GM10248 (cell line): ENCODE measurements at regions of chr6 and their contacts with region 1.

Region 1: DNA sequence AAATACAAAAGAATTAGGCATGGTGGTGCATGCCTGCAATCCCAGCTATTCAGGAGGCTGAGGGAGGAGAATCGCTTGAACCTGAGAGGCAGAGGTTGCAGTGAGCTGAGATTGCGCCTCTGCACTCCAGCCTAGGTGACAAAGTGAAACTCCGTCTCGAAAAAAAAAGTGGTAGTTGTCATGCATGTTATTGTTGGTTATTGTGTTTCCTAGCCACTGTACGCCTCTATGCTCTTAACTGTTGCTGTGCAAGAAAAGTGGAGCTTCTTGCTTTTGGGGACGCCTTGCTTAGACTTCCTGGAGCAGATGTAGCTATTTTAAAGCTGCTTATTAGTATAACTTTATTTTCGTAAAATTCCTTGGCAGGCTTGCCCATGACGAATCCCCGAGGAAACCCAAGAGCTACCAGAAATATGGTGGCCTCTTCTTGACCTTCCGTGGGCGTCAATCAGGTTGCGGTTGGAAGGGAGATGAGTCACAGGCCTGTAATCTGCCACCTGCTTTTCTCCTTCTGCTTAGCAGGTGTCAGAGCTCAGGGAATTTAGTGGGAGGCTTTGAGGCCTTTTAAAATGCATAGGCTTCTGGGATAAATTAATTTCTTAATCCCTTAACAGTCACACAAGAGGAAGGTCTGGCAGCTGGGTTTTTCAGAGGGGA is 17.3 kb downstream of the GABRR2 start:
- DNase-seq: peak; percentile 78
- CTCF ChIP-seq: no peak

Region 2: GRCh38 chr6:89217299-89217910 is 80.4 kb before region 1 on chr6 and contains the start of gene GABRR1:
- CTCF ChIA-PET with region 1: no interaction called
- POLR2A ChIA-PET with region 1: no interaction called
- DNase-seq: no peak
- CTCF ChIP-seq: no peak

Region 3: DNA sequence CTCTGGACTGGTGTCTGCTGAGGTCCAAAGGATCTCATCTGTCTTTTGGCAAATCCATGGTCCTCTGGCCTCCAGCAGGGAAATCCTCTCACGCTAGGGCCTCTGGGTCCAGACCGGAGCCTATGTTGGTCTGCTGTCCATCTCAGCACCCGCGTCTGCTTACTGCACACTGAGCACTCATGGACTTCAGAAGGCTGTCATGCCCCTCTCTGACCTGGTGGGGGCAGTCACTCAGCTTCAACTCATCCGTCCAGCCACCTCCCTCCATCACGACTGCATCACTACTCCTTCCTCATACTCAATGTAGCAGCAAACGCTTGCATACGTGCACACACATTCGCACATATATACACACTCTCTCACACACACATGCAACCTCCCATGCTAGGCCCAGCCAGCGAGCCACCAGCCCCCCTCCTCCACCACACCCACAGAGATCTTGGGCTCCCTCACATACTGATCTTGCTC is 16.0 kb before region 1 on chr6:
- CTCF ChIA-PET with region 1: interaction called, 30 read pairs
- POLR2A ChIA-PET with region 1: no interaction called
- DNase-seq: peak; percentile 86
- CTCF ChIP-seq: peak; percentile 67

Region 4: GRCh38 chr6:89308525-89309395 is 10.9 kb after region 1 on chr6:
- CTCF ChIA-PET with region 1: interaction called, 15 read pairs
- POLR2A ChIA-PET with region 1: no interaction called
- DNase-seq: no peak
- CTCF ChIP-seq: no peak

Region 5: DNA sequence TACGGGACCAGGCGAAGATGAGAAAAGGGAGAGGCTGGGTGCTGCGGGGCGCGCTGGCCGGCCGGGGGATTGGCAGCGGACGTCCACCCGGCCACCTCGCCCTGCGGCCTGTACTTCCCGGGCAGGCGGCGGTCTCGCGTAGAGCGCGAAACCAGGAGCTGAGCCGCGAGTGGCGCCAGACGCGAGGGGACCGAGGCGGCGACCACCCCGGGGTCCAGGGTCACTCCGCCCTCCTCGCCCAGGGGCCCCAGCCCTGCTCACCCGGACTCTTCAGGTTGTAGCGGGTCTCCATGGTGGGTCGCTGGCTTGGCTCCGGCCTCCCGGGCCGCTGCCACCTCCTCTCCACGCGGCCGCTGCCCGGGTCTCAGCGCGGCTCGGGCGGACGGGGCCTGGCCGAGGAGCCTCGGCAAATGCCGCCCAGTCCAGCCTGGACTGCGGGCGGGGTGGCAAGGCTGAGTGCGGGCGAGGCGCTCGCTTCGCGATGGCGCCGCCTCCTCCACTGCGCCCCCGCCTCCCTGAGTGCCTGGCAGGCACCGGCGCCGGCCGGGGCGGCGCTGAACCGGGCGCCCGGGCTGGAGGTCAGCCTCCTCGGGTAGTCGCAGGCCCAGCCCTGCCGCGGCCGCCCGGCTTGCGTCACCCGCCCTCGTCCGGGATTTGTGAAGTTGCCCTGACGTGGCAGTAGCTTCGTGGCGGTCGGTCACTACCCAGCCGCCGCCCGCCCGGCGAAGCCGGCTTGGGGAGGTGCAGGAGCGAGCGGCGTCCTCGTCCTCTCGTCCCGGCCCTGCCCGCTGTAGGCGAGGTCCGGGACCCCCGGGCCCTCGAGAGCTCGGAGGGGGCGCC is 54.7 kb after region 1 on chr6 and contains the start of gene UBE2J1:
- CTCF ChIA-PET with region 1: interaction called, 22 read pairs
- POLR2A ChIA-PET with region 1: no interaction called
- DNase-seq: peak; percentile 81
- CTCF ChIP-seq: no peak